Activated naive CD4-positive, alpha-beta T cell treated with anti-CD3 and anti-CD28 coated beads for 36 hours (primary cell): ENCODE measurements at regions of chr1 and their contacts with region 1.

Region 1: GRCh38 chr1:32817159-32817814 is at the starts of genes S100PBP and YARS1:
- DNase-seq: peak; percentile 100
- H3K4me3 Mint-ChIP-seq: peak within 1 kb of the TSS; percentile 92
- H3K27ac Mint-ChIP-seq: peak within 1 kb of the TSS; percentile 94
- H3K4me1 Mint-ChIP-seq: peaks cover 51% of the 10 kb centered on the region
- H3K27me3 Mint-ChIP-seq: no peaks in the 10 kb centered on the region
- total RNA-seq, gene S100PBP: 26.1 to 31.2 TPM
- total RNA-seq, gene YARS1: 293 to 312 TPM

Region 2: DNA sequence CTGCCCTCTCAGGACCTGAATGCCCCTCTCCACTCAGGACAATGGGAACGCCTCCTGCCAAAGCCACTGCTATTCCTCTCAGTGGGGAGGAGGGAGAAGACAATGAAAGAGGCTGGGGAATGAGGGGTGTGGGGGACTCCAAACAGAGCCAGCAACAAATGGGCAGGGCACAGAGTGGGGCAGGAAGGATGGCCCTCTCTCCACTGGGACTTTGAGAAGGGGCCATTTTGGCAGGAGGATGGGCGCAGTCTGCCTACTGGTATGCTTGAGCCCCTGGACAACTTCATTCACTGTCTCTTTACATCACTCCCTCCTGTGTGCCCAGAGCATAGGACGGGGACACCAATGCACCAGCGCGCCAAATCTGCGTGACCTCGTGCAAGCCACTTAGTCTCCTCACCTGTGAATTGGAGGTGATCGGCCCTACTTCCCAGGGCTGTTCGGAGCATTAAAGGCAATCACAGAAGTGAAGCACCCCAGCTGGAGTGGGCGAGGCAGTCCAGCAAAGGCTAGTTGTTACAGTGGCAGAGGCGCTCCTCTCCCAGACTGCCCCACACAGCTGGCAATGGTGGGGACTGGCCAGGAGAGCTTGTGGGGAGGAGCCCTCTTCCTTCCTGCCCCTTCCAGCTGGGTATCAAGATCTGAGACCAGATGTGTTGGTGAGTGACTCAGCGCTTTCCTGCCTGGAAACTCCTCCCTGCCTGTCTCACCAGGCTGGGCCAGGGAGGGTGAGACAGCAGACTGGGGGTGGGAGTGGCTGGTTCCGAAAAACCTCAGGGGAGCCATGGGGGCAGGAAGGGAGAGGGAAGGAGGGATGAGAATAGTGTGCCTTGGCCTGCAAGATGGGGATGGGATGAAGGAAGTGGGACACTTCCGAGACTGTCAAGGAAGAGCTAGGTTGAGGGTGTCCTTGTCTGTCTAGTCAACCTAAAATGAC is 92.3 kb before region 1 on chr1:
- CTCF ChIA-PET with region 1: no interaction called
- intact Hi-C with region 1: no loop called
- DNase-seq: peak; percentile 67
- H3K4me3 Mint-ChIP-seq: no peak overlapping the region
- H3K27ac Mint-ChIP-seq: no peak overlapping the region
- H3K4me1 Mint-ChIP-seq: peaks cover 10% of the 10 kb centered on the region
- H3K27me3 Mint-ChIP-seq: peaks cover 7% of the 10 kb centered on the region

Region 3: DNA sequence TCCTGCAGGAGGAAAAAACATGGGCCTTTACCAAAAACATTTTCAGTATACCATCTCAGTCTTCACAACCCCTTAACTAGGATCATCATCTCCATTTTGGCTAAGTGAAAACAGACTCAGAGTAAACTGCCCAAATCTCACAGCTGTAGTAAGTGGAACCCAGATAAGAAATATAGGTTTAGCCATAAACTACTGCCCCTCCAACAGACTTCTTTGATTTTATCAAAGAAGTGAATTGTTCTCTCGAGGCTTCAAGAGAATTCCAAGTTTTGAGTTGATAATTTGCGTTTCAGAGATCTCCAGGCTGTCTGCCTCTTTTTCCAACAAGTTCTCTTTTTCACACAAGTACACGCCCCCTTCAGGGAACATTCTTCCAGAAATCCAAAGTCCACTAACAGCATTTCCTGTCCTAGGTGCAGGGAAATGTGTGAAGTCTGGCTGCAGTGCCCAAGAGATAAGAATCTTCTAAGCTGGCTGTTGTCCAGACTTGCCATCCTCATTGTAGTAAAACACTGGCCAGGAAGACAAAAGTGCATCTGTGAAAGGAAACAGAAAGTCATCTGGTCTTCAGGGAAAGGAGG is 116.5 kb after region 1 on chr1:
- CTCF ChIA-PET with region 1: no interaction called
- intact Hi-C with region 1: no loop called
- DNase-seq: no peak
- H3K4me3 Mint-ChIP-seq: no peak overlapping the region
- H3K27ac Mint-ChIP-seq: no peak overlapping the region
- H3K4me1 Mint-ChIP-seq: peaks cover 11% of the 10 kb centered on the region
- H3K27me3 Mint-ChIP-seq: no peaks in the 10 kb centered on the region

Region 4: GRCh38 chr1:33036526-33037503 is 219.5 kb after region 1 on chr1 and contains the start of gene AK2:
- CTCF ChIA-PET with region 1: no interaction called
- intact Hi-C with region 1: loop called (anchors 5 kb)
- DNase-seq: peak; percentile 96
- H3K4me3 Mint-ChIP-seq: peak within 1 kb of the TSS; percentile 92
- H3K27ac Mint-ChIP-seq: peak within 1 kb of the TSS; percentile 87
- H3K4me1 Mint-ChIP-seq: peaks cover 40% of the 10 kb centered on the region
- H3K27me3 Mint-ChIP-seq: no peaks in the 10 kb centered on the region
- total RNA-seq, gene AK2: 311 to 328 TPM

Region 5: DNA sequence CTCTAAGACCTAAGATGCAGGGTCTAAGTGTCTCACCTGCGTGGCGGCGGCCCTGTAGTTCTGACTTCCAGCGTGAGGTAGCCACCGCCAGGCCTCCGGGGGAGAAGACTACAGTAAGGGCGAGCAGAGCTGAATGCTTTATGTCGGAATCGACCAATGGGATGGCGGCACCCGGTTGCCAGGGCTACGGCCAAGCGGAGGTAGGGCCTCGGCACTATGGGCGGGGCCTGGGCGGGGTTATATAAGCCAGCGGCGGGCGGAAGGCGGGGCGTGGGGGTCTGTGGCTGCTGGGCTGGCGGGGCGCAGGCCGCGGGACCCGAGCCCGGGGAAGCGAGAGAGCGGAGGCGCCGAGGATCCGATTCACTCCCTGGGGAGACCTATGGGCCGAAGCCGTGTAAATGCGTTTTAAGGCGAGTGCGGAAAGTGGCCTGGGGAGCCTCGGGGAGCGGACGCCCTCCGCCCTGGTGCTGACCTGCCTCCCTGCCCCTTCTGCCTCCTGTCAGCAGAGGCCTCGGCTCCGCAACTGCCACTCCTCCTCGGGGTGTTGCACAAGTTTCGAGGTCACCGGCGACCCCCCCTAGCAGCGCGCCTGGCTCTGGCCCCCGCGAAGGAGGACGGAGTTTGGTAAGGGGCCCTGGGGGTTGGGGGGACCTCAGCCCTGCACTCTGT is 263.7 kb after region 1 on chr1 and contains the start of gene AZIN2:
- CTCF ChIA-PET with region 1: no interaction called
- intact Hi-C with region 1: no loop called
- DNase-seq: peak; percentile 98
- H3K4me3 Mint-ChIP-seq: peak within 1 kb of the TSS; percentile 75
- H3K27ac Mint-ChIP-seq: peak within 1 kb of the TSS; percentile 19
- H3K4me1 Mint-ChIP-seq: peaks cover 18% of the 10 kb centered on the region
- H3K27me3 Mint-ChIP-seq: no peaks in the 10 kb centered on the region
- total RNA-seq, gene AZIN2: 1.5 to 1.6 TPM